Breast epithelium (tissue), 4 donors: ENCODE measurements at regions of chr4 and their contacts with region 1.

Region 1: GRCh38 chr4:175646802-175647201 is 165.3 kb downstream of the GPM6A start:
- DNase-seq: no peak
- H3K4me3 ChIP-seq: no peak overlapping the region
- H3K27ac ChIP-seq: no peak overlapping the region
- H3K4me1 ChIP-seq: no peaks in the 10 kb centered on the region
- H3K27me3 ChIP-seq: no peaks in the 10 kb centered on the region
- CTCF ChIP-seq: no peak
- POLR2A ChIP-seq: no peak

Region 2: DNA sequence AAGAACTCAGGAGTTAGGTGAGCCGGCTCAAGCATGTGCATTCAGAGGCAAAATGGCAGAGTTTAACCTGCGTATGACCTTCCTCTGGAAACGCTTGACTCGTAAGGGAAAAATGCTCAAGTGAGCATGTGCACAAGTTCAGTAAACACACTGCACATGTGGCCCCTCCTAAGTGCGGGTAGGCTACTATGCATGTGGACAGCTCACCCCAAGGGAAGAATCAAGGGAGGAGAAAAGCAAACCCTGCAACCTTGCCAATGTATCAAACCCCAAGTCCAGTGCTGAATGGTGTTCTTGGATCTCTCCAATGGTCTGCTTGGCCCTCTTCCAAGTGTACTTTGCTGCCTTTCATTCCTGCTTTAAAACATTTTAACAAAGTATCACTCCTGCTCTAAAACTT is 321.6 kb before region 1 on chr4:
- intact Hi-C with region 1: loop called (anchors 5 kb)
- DNase-seq: no peak
- H3K4me3 ChIP-seq: no peak overlapping the region
- H3K27ac ChIP-seq: no peak overlapping the region
- H3K4me1 ChIP-seq: no peaks in the 10 kb centered on the region
- H3K27me3 ChIP-seq: no peaks in the 10 kb centered on the region
- CTCF ChIP-seq: no peak
- POLR2A ChIP-seq: no peak

Region 3: DNA sequence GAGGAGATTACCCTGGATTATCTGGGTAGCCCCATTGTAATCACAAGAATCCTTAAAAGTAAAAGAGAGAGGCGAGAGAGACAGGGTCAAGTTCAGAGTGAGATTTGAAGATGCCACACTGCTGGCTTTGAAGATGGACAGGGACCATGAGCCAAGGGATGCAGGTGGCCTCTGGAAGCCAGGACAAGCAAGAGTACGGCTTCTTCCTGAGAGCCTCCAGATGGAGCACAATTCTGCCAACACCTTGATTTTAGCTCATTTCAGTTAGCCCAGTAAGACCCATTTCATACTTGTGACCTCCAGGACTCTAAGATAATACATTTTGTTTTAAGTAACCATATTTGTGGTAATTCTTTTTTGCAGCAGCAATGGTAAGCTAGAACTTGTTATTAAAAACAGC is 45.0 kb after region 1 on chr4:
- intact Hi-C with region 1: loop called (anchors 2 kb)
- DNase-seq: no peak
- H3K4me3 ChIP-seq: no peak overlapping the region
- H3K27ac ChIP-seq: no peak overlapping the region
- H3K4me1 ChIP-seq: no peaks in the 10 kb centered on the region
- H3K27me3 ChIP-seq: no peaks in the 10 kb centered on the region
- CTCF ChIP-seq: no peak
- POLR2A ChIP-seq: no peak